Panc1 (cell line): ENCODE measurements at regions of chr7 and their contacts with region 1.

Region 1: DNA sequence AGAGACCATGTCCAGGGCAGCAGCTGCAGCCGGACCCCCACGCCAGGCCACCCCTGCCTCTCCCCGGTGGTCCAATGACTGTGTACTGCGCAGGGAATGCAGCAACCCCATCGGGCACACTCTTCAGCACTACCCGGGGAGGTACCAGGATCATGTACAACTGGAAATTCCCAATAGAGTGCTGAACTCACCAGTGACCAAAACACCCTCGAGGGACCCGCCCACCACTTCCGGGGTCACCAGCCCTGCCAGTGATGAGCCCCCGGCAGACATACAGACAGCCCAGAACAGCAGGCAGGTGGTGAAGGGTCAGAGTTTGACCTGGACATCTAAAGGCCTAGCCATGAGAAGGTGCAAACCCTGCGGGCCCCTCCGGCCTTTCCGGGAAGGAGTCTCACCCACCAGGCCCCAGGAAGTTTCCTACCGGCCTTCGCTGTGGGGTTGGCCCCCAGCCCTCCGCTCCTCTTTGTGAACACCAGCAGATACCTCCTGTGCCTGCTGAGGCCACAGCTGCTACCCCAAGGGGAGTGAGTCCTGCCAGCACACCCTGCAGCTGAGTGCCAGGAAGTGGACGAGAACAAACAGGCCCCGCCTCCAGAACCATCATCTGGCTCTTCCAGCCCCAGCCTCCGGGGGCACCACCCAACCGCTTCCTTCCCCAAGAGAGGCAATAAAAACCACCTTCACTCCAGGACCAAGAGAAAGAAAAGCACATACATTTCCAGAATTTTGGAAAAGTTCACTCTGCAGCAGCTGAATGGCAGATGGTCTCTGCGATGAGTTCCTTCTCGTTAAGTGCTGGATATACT is 5.0 kb upstream of the ANKRD61 start:
- DNase-seq: no peak
- ATAC-seq: peak; percentile 88
- H3K4me3 ChIP-seq: no peak overlapping the region
- H3K27ac ChIP-seq: no peak overlapping the region
- H3K4me1 ChIP-seq: no peaks in the 10 kb centered on the region
- H3K27me3 ChIP-seq: no peaks in the 10 kb centered on the region
- CTCF ChIP-seq: no peak

Region 2: GRCh38 chr7:6117312-6117932 is 91.2 kb after region 1 on chr7:
- CTCF ChIA-PET with region 1: no interaction called
- POLR2A ChIA-PET with region 1: no interaction called
- in situ Hi-C with region 1: loop called (anchors 5 kb)
- intact Hi-C with region 1: no loop called
- DNase-seq: no peak
- ATAC-seq: no peak
- H3K4me3 ChIP-seq: no peak overlapping the region
- H3K27ac ChIP-seq: no peak overlapping the region
- H3K4me1 ChIP-seq: no peaks in the 10 kb centered on the region
- H3K27me3 ChIP-seq: no peaks in the 10 kb centered on the region
- CTCF ChIP-seq: no peak